ENCODE measurements at regions of chr9 and their contacts with region 1.

Region 1: GRCh38 chr9:128723866-128724743 is at the start of gene ZDHHC12:
- DNase-seq: peak; percentile 97 to 100 (median 99)
- ATAC-seq: peak; percentile 96
- H3K4me3 ChIP-seq: peak within 1 kb of the TSS; percentile 90
- H3K4me3 Mint-ChIP-seq: peak within 1 kb of the TSS; percentile 95
- H3K27ac ChIP-seq: peak within 1 kb of the TSS; percentile 70 to 72
- H3K27ac Mint-ChIP-seq: peak within 1 kb of the TSS; percentile 86
- H3K4me1 ChIP-seq: peaks cover 53% of the 10 kb centered on the region
- H3K4me1 Mint-ChIP-seq: peaks cover 33% of the 10 kb centered on the region
- H3K27me3 ChIP-seq: no peaks in the 10 kb centered on the region
- H3K27me3 Mint-ChIP-seq: no peaks in the 10 kb centered on the region
- CTCF ChIP-seq: no peak
- total RNA-seq, gene ZDHHC12: 22.0 to 23.7 TPM

Region 2: DNA sequence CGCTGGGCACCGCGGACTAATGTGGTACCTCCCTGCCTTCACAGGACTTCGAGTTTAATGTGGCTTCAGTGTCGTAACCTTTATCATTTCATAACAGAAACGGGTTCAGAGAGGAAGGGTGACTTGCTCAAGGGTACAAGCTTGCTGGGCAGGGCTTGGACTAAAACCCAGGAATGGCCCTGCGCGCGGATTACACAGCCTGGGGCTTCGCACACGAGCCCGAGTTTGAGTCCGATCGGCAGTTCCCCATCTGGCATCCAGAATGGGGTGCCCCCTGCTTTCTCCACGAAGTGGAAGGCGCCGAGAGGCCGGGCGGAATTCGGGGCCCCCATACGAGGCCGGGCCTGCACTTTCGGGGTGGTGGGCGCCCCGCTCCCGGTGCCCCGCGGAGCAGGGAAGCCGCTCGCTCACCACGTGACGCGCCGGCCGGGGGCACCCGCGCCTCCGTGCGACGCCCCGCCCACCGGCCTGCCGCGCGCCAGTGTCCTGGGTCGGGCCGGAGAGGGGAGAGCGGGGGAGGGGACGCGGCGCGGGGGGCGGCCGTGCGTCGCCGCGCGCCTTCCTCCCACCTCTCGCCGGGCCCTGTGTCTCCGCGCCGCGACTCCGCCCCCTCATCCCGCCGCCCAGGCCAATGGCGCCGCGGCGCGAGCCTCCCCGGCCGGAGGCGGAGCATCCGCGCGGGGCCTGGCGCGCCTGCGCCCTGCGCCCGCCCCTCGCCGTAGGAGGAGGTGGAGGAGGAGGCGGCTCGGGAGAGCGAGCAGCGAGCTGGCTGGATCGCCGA is 35.4 kb before region 1 on chr9 and contains the start of gene SET:
- CTCF ChIA-PET with region 1: no interaction called
- POLR2A ChIA-PET with region 1: interaction called, 33 read pairs
- intact Hi-C with region 1: loop called (anchors 2 to 5 kb)
- DNase-seq: peak; percentile 82 to 97 (median 92)
- ATAC-seq: peak; percentile 78
- H3K4me3 ChIP-seq: peak within 1 kb of the TSS; percentile 89
- H3K4me3 Mint-ChIP-seq: peak within 1 kb of the TSS; percentile 95
- H3K27ac ChIP-seq: peak within 1 kb of the TSS; percentile 84
- H3K27ac Mint-ChIP-seq: peak within 1 kb of the TSS; percentile 94
- H3K4me1 ChIP-seq: peaks cover 58% of the 10 kb centered on the region
- H3K4me1 Mint-ChIP-seq: peaks cover 59% of the 10 kb centered on the region
- H3K27me3 ChIP-seq: no peaks in the 10 kb centered on the region
- H3K27me3 Mint-ChIP-seq: no peaks in the 10 kb centered on the region
- CTCF ChIP-seq: no peak
- total RNA-seq, gene SET: 228 to 241 TPM

Measured in CD4-positive, alpha-beta T cell (primary cell).